ENCODE measurements at regions of chr22 and their contacts with region 1.

Region 1: DNA sequence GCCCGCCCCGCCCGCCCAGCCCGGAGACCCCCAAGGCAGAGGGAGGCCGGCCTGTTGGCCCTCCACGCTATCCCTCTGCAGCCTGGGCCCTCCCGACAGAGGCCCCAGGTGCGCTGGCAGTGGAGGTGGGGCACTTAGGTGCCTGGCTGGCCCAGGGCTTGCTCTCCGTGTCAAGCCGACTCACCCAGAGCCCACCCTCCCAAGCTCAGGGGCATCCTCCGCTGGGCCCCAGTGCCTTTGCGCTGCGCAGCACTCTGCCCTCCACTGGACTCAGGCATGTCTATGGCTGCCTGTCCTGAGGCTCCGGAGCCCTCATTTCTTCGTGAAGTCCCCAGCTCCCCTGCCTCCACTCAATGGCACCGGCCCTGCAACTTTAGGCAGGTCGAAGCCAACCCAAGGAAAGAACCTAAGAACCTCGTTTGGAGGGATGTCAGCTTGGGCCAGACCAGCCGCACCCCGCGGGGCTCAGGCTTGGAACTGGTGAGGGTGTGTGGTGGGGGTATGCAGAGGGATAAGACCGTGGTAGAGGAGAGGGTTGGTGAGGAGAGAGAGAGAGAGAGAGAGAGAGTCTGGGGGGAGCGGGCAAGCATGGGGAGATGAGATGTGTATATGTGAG is 6.1 kb downstream of the SMIM45 start:
- DNase-seq: no peak
- ATAC-seq: peak; percentile 5 to 35 (median 10)
- H3K4me3 ChIP-seq: no peak overlapping the region
- H3K4me3 Mint-ChIP-seq: no peak overlapping the region
- H3K27ac ChIP-seq: no peak overlapping the region
- H3K27ac Mint-ChIP-seq: peak overlapping the region in 1 of 2 donors; percentile 74
- H3K4me1 ChIP-seq: peaks cover 9% of the 10 kb centered on the region
- H3K4me1 Mint-ChIP-seq: peaks cover 5 to 14% of the 10 kb centered on the region in 2 donors
- H3K27me3 ChIP-seq: no peaks in the 10 kb centered on the region
- H3K27me3 Mint-ChIP-seq: peaks cover 0 to 4% of the 10 kb centered on the region in 2 donors
- CTCF ChIP-seq: peak; percentile 43

Region 2: DNA sequence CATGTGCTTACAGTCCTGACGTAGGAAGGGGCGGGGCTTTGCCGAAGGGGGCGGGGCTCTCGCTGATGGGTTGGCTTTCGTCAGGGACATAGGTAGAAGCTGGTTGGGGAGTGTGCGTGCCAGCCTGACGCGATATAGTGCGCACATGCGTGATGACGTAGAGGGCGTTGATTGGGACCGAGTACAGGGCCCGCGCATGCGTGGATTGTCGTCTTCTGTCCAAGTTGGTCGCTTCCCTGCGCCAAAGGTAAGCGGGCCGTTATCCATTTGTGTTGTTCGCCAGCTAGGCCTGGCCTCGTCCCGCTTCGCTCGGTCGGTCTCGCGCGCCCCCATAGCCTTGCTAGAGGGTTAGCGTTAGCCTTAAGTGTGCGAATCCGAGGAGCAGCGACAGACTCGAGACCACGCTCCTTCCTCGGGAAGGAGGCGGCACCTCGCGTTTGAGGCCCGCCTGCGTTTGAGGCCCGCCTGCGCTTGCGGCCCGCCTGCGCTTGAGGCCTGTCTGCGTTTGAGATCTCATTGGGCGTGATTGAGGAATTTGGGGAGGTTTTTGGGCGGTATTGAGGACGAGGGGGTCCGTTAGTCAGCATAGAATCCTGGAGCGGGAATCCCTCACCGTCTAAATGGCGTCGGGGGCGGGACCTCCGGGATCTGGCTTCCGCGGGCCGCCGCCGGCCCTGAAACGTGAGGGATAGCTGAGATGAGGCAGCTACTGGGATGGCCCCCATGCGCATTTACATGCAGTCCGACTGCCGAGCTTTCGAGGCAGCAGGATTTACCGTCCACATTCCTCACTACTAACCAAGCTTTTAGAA is 336.7 kb before region 1 on chr22 and contains the start of gene XRCC6:
- intact Hi-C with region 1: no loop called
- DNase-seq: peak; percentile 99 to 100
- ATAC-seq: peak; percentile 92 to 99 (median 92)
- H3K4me3 ChIP-seq: peak within 1 kb of the TSS; percentile 89
- H3K4me3 Mint-ChIP-seq: peak within 1 kb of the TSS; percentile 100
- H3K27ac ChIP-seq: peak within 1 kb of the TSS; percentile 96
- H3K27ac Mint-ChIP-seq: peak within 1 kb of the TSS; percentile 97 to 100
- H3K4me1 ChIP-seq: peaks cover 13% of the 10 kb centered on the region
- H3K4me1 Mint-ChIP-seq: peaks cover 21 to 26% of the 10 kb centered on the region in 2 donors
- H3K27me3 ChIP-seq: no peaks in the 10 kb centered on the region
- H3K27me3 Mint-ChIP-seq: no peaks in the 10 kb centered on the region
- CTCF ChIP-seq: no peak
- total RNA-seq, gene XRCC6: 134 to 142 (median 140) TPM

Region 3: GRCh38 chr22:41697126-41697775 is 260.8 kb before region 1 on chr22:
- intact Hi-C with region 1: loop called (anchors 1 kb)
- DNase-seq: peak; percentile 91 to 92
- ATAC-seq: peak; percentile 80 to 83 (median 81)
- H3K4me3 ChIP-seq: no peak overlapping the region
- H3K4me3 Mint-ChIP-seq: peak overlapping the region; percentile 61
- H3K27ac ChIP-seq: peak overlapping the region; percentile 10
- H3K27ac Mint-ChIP-seq: peak overlapping the region; percentile 30 to 78
- H3K4me1 ChIP-seq: peaks cover 18% of the 10 kb centered on the region
- H3K4me1 Mint-ChIP-seq: peaks cover 6 to 13% of the 10 kb centered on the region in 2 donors
- H3K27me3 ChIP-seq: no peaks in the 10 kb centered on the region
- H3K27me3 Mint-ChIP-seq: no peaks in the 10 kb centered on the region
- CTCF ChIP-seq: peak; percentile 98

Region 4: GRCh38 chr22:41919357-41920224 is 38.5 kb before region 1 on chr22:
- intact Hi-C with region 1: no loop called
- DNase-seq: peak in 1 of 2 donors; percentile 61
- ATAC-seq: peak in 2 of 3 donors; percentile 57 to 61
- H3K4me3 ChIP-seq: peak overlapping the region; percentile 49
- H3K4me3 Mint-ChIP-seq: peak overlapping the region; percentile 79
- H3K27ac ChIP-seq: peak overlapping the region; percentile 72
- H3K27ac Mint-ChIP-seq: peak overlapping the region in 1 of 2 donors; percentile 54
- H3K4me1 ChIP-seq: peaks cover 52% of the 10 kb centered on the region
- H3K4me1 Mint-ChIP-seq: peaks cover 0 to 19% of the 10 kb centered on the region in 2 donors
- H3K27me3 ChIP-seq: peaks cover 36% of the 10 kb centered on the region
- H3K27me3 Mint-ChIP-seq: peaks cover 11 to 13% of the 10 kb centered on the region in 2 donors
- CTCF ChIP-seq: no peak

Measured in natural killer cell (primary cell).